GM12878 (cell line): ENCODE measurements at regions of chr1 and their contacts with region 1.

Region 1: GRCh38 chr1:181033799-181034451 is at the start of gene MR1:
- DNase-seq: peak; percentile 92
- ATAC-seq: peak; percentile 90
- H3K4me3 ChIP-seq: peak within 1 kb of the TSS; percentile 93
- H3K27ac ChIP-seq: peak within 1 kb of the TSS; percentile 89
- H3K4me1 ChIP-seq: peaks cover 23% of the 10 kb centered on the region
- H3K27me3 ChIP-seq: no peaks in the 10 kb centered on the region
- CTCF ChIP-seq: no peak
- EP300 ChIP-seq: no peak
- POLR2A ChIP-seq: peak; percentile 84
- RAD21 ChIP-seq: no peak
- polyA plus RNA-seq, gene MR1: 24.7 to 28.5 TPM

Region 2: GRCh38 chr1:181021811-181022434 is 12.0 kb before region 1 on chr1:
- CTCF ChIA-PET with region 1: interaction called, 17 read pairs
- POLR2A ChIA-PET with region 1: interaction called, 70 read pairs
- RAD21 ChIA-PET with region 1: interaction called, 40 read pairs
- SMC1A ChIA-PET with region 1: interaction called, 135 read pairs
- in situ Hi-C with region 1: no loop called
- intact Hi-C with region 1: no loop called
- DNase-seq: no peak
- ATAC-seq: peak; percentile 76
- H3K4me3 ChIP-seq: peak overlapping the region; percentile 90
- H3K27ac ChIP-seq: peak overlapping the region; percentile 89
- H3K4me1 ChIP-seq: peaks cover 12% of the 10 kb centered on the region
- H3K27me3 ChIP-seq: no peaks in the 10 kb centered on the region
- CTCF ChIP-seq: no peak
- EP300 ChIP-seq: no peak
- POLR2A ChIP-seq: no peak
- RAD21 ChIP-seq: no peak

Region 3: GRCh38 chr1:181062836-181063428 is 29.0 kb after region 1 on chr1:
- CTCF ChIA-PET with region 1: interaction called, 30 read pairs
- POLR2A ChIA-PET with region 1: interaction called, 5 read pairs
- RAD21 ChIA-PET with region 1: interaction called, 20 read pairs
- SMC1A ChIA-PET with region 1: interaction called, 24 read pairs
- in situ Hi-C with region 1: no loop called
- intact Hi-C with region 1: no loop called
- DNase-seq: peak; percentile 87
- ATAC-seq: peak; percentile 90
- H3K4me3 ChIP-seq: no peak overlapping the region
- H3K27ac ChIP-seq: peak overlapping the region; percentile 96
- H3K4me1 ChIP-seq: peaks cover 32% of the 10 kb centered on the region
- H3K27me3 ChIP-seq: no peaks in the 10 kb centered on the region
- CTCF ChIP-seq: no peak
- EP300 ChIP-seq: 0 out of 4 replicates have a peak, but pooled peaks of 1 of the 2 experiments have one; percentile 25
- POLR2A ChIP-seq: 0 out of 2 replicates have a peak, but pooled peaks have one; percentile 3
- RAD21 ChIP-seq: no peak

Region 4: DNA sequence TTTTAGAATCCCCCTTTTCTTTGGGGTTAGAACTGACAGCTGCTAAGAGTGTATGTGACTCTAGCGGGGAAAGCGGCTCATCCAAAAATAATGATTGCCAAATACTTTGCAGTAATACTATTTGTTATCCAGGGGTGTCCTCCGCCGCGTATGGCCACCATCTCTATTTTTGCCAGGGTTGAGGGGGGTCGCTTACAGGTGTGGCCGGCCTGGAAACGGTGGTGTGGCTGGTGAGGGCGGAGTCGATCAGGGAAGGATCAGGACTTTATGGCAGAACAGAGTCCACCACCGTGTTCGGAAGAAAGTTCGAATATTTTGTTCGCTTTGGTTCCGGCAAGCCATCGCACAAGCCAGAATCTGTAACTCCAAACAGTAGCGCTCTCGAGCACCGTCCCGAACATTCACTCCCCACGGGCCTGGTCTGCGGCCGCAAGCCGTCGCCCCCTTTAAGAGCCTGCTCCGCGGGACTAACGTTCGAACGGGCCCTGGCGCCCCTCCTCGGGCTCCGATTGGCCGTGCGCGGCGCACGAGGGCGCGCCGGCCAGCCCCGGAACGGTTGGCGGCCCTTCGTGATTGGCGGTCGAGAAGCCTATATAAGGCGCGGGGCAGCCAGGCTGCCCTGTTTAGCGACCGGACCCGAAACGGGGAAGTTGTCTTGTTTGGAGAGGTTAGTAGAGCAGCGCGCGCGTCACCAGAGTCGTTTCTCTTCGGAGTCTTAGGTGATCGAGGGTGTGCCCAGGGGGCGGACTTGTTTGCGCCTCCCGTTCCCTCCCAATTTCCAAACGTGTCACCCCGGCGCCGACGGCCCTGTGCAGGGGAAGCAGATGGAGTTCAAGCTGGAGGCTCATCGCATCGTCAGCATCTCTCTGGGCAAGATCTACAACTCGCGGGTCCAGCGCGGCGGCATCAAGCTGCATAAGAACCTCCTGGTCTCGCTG is 54.4 kb after region 1 on chr1 and contains the start of gene IER5:
- CTCF ChIA-PET with region 1: interaction called, 86 read pairs
- POLR2A ChIA-PET with region 1: interaction called, 20 read pairs
- RAD21 ChIA-PET with region 1: interaction called, 31 read pairs
- SMC1A ChIA-PET with region 1: interaction called, 33 read pairs
- in situ Hi-C with region 1: loop called (anchors 5 kb)
- intact Hi-C with region 1: loop called (anchors 1 kb)
- DNase-seq: peak; percentile 83
- ATAC-seq: peak; percentile 82
- H3K4me3 ChIP-seq: peak within 1 kb of the TSS; percentile 99
- H3K27ac ChIP-seq: peak within 1 kb of the TSS; percentile 97
- H3K4me1 ChIP-seq: peaks cover 13% of the 10 kb centered on the region; the same call in 1 of the 2 replicates
- H3K27me3 ChIP-seq: no peaks in the 10 kb centered on the region
- CTCF ChIP-seq: 0 out of 6 replicates have a peak, but pooled peaks of 1 of the 3 experiments have one; percentile 0
- EP300 ChIP-seq: 0 out of 4 replicates have a peak, but pooled peaks of 1 of the 2 experiments have one; percentile 15
- POLR2A ChIP-seq: peak; percentile 98
- RAD21 ChIP-seq: no peak
- polyA plus RNA-seq, gene IER5: 6.2 to 19.5 TPM

Region 5: DNA sequence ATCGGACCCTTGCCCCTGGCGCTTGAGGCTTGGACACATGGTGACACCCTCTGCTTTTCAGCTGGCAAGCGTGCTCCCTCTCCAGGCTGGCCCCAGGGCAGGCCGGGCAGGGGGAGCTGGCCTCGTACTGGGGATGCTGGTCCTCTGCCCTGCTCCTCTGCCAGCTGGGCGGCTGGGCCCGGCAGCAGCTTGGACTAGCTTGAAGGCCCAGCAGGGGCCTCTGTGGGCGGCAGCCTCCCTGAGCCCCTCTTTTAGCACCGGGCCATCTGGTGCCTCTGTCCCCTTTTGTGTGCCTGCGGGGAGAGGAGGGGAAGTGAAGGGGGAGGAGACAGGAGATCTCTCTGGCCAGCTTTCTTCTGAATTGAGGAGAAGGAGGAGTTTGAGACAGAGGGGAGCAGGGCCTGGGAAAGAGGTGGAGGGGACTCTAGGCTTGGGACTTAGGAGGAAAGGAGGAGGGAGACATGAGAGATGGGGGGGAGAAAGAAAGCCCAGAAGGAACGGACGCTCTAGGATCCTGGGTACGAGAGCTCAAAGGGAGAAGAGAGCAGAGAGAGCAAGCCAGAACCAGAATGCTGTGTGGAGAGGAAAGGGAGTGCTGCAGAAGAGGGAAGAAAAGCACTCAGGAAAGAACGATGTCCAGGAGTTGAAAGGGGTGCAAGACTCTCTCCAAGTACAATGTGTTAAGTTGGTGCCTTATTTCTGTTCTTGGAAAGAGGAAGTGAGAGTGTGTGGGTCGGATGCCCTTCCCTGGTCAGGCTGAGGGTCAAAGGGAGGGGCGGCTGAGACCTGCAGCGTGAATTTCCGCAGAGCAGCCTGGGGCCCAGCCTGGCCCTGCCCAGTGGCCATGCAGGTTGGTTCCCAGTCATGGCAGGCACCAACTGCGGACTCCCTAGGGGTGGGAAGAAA is 94.9 kb after region 1 on chr1:
- CTCF ChIA-PET with region 1: interaction called, 12 read pairs
- POLR2A ChIA-PET with region 1: interaction called, 7 read pairs
- RAD21 ChIA-PET with region 1: interaction called, 4 read pairs
- SMC1A ChIA-PET with region 1: interaction called, 23 read pairs
- in situ Hi-C with region 1: no loop called
- intact Hi-C with region 1: no loop called
- DNase-seq: no peak
- ATAC-seq: peak; percentile 66
- H3K4me3 ChIP-seq: peak overlapping the region; percentile 63
- H3K27ac ChIP-seq: peak overlapping the region; percentile 92
- H3K4me1 ChIP-seq: peaks cover 79% of the 10 kb centered on the region
- H3K27me3 ChIP-seq: no peaks in the 10 kb centered on the region
- CTCF ChIP-seq: no peak
- EP300 ChIP-seq: peak in 1 of 2 experiments; percentile 89; a peak in 2 of 4 replicates
- POLR2A ChIP-seq: peak; percentile 57
- RAD21 ChIP-seq: no peak; the same call in 1 of the 2 replicates

Region 6: GRCh38 chr1:181166377-181167196 is 132.7 kb after region 1 on chr1:
- CTCF ChIA-PET with region 1: interaction called, 31 read pairs
- POLR2A ChIA-PET with region 1: interaction called, 8 read pairs
- RAD21 ChIA-PET with region 1: interaction called, 10 read pairs
- SMC1A ChIA-PET with region 1: interaction called, 14 read pairs
- in situ Hi-C with region 1: no loop called
- intact Hi-C with region 1: loop called (anchors 2 kb)
- DNase-seq: no peak
- ATAC-seq: peak; percentile 100
- H3K4me3 ChIP-seq: no peak overlapping the region
- H3K27ac ChIP-seq: no peak overlapping the region
- H3K4me1 ChIP-seq: no peaks in the 10 kb centered on the region
- H3K27me3 ChIP-seq: no peaks in the 10 kb centered on the region
- CTCF ChIP-seq: peak; percentile 83 to 88 (median 84)
- EP300 ChIP-seq: no peak
- POLR2A ChIP-seq: no peak
- RAD21 ChIP-seq: peak; percentile 94

Region 7: GRCh38 chr1:181178241-181178879 is 144.4 kb after region 1 on chr1:
- CTCF ChIA-PET with region 1: no interaction called
- POLR2A ChIA-PET with region 1: no interaction called
- RAD21 ChIA-PET with region 1: no interaction called
- SMC1A ChIA-PET with region 1: no interaction called
- in situ Hi-C with region 1: no loop called
- intact Hi-C with region 1: no loop called
- DNase-seq: no peak
- ATAC-seq: no peak
- H3K4me3 ChIP-seq: no peak overlapping the region
- H3K27ac ChIP-seq: no peak overlapping the region
- H3K4me1 ChIP-seq: peaks cover 12% of the 10 kb centered on the region
- H3K27me3 ChIP-seq: no peaks in the 10 kb centered on the region; a peak in 1 of 4 replicates
- CTCF ChIP-seq: no peak
- EP300 ChIP-seq: no peak
- POLR2A ChIP-seq: no peak
- RAD21 ChIP-seq: no peak